Mammary epithelial cell (primary cell): ENCODE measurements at regions of chr9 and their contacts with region 1.

Region 1: DNA sequence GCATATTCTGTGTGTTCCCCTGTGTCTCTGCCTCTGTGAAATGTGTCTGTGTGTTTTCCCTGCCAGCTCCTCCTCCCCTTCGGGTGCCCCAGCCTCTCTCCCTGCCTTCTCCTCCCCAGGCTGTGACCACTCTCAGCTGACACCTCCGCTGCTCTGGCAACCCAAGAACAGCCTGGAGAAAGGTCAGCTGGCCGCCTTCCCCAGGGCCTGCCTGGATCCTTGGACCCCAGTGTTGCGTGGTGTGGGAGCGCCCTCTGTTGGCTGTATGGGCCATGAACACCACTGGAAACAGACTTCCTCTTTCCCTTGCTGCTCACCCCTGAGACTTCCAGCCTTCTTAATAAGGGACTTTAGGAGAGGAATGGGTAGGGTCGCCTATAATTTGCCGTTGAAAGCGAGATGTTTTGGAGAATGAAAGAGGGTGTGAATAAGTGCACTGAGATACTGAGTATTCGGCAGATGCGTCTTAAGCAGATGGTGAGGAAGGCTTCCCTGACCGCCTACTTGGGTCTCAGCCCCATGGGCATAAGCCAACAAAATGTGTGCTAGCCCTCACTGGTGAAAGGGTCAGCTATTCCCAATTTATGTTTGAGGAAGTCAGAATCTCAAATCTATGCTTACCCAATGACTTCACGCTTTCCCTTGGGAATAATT is 114.9 kb upstream of the TRIM32 start:
- DNase-seq: peak; percentile 48
- H3K4me3 ChIP-seq: no peak overlapping the region
- H3K27ac ChIP-seq: no peak overlapping the region
- H3K4me1 ChIP-seq: no peaks in the 10 kb centered on the region
- H3K27me3 ChIP-seq: no peaks in the 10 kb centered on the region
- CTCF ChIP-seq: peak; percentile 90 to 96

Region 2: DNA sequence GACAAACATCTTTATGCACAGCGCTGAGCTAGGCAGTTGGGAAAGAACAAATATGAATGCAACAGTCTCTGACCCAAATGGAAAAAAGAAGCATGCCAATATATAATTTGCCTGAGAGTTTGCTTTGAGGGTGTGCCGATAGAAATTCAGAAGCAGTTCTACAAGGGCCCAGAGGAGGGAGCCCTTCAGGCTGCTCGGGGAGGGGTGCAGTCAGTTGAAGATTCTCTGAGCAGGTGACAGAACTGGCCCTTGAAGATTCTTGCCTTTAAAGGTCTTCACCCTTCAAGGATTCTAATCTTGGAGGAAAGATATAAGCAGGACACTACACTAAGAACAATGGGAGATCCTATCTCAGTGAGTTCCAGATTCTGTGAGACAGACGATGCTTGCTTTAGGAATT is 422.4 kb before region 1 on chr9:
- CTCF ChIA-PET with region 1: interaction called, 3 read pairs
- dilution Hi-C with region 1: no loop called
- in situ Hi-C with region 1: loop called (anchors 10 kb)
- intact Hi-C with region 1: loop called (anchors 1 kb)
- DNase-seq: no peak
- H3K4me3 ChIP-seq: no peak overlapping the region
- H3K27ac ChIP-seq: no peak overlapping the region
- H3K4me1 ChIP-seq: peaks cover 18% of the 10 kb centered on the region
- H3K27me3 ChIP-seq: peaks cover 6% of the 10 kb centered on the region
- CTCF ChIP-seq: peak; percentile 69 to 79

Region 3: GRCh38 chr9:116163293-116164055 is 408.7 kb before region 1 on chr9:
- CTCF ChIA-PET with region 1: no interaction called
- dilution Hi-C with region 1: no loop called
- in situ Hi-C with region 1: loop called (anchors 10 kb)
- intact Hi-C with region 1: loop called (anchors 1 kb)
- DNase-seq: no peak
- H3K4me3 ChIP-seq: no peak overlapping the region
- H3K27ac ChIP-seq: no peak overlapping the region
- H3K4me1 ChIP-seq: no peaks in the 10 kb centered on the region
- H3K27me3 ChIP-seq: no peaks in the 10 kb centered on the region
- CTCF ChIP-seq: peak; percentile 52

Region 4: GRCh38 chr9:116288658-116289057 is 283.6 kb before region 1 on chr9:
- CTCF ChIA-PET with region 1: no interaction called
- dilution Hi-C with region 1: no loop called
- in situ Hi-C with region 1: no loop called
- intact Hi-C with region 1: loop called (anchors 2 kb)
- DNase-seq: peak; percentile 96
- H3K4me3 ChIP-seq: no peak overlapping the region
- H3K27ac ChIP-seq: no peak overlapping the region
- H3K4me1 ChIP-seq: no peaks in the 10 kb centered on the region
- H3K27me3 ChIP-seq: peaks cover 12% of the 10 kb centered on the region
- CTCF ChIP-seq: no peak

Region 5: DNA sequence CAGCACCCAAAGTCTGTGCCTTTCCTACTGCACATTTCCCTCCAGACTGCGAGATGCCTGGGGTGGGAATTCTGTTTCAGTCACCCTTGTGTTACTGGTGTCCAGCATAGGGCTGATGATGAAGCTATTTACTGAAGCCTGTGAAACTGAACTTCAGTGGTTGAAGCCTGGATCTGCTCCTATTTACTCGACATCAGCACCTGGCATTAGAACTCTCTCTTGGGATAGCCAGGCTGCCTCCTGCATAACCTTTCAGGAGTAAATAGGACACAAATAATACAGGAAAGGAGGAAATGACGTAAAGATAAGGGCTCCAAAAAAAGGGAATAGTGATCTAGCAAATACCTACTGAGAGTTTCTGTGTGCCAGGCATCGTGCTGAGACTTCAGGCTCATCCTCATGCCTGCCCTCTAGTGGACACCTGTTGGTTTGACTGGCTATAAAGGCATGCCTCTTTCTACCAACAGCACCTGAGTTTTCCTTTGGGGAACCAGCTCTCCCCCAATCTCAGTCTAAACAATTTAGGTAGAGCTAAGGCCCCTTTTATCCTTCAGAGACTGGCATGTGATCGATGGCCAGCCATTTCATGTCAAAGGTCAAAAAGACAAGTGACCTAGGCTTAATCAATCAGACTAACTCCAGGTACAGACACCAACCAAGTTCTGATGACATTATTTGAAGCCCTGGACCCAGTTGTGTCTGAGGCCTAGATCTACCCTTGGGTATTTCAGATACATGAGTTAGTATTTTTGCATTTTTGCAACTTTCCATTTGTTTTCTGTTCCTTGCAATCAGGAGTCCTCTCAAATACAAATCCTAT is 77.2 kb before region 1 on chr9:
- CTCF ChIA-PET with region 1: interaction called, 3 read pairs
- dilution Hi-C with region 1: no loop called
- in situ Hi-C with region 1: loop called in 1 of 2 experiments (anchors 10 kb)
- intact Hi-C with region 1: loop called (anchors 1 kb)
- DNase-seq: no peak
- H3K4me3 ChIP-seq: no peak overlapping the region
- H3K27ac ChIP-seq: no peak overlapping the region
- H3K4me1 ChIP-seq: no peaks in the 10 kb centered on the region
- H3K27me3 ChIP-seq: no peaks in the 10 kb centered on the region
- CTCF ChIP-seq: peak; percentile 83 to 86

Region 6: DNA sequence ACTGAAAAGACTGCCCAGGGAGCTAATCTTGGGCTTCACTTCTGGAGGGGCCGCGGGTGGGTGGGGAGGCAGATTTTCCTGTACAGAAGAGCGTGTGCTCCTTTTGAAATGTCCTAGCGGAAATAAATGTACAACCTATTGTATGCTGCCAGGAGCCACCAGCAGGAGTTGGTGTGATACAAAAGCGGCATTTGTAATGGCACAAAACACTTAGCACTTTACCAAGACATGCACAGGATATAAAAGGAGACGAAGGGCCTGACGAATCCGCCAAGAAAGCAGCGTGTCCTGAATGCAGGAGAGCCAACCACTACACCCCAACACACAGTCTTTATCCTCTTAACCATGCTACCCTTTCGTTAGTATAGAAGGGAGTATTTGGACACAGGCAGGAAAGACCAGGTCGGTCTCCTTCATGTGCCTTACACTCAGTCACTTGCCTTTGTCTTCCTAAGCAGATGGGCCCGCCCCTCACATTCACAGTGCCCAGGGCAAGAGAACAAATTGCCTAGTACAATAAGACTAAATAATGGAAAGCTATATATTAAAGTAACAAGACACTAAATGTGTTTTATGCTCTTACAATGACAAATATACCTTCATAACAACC is 333.0 kb after region 1 on chr9:
- CTCF ChIA-PET with region 1: no interaction called
- dilution Hi-C with region 1: no loop called
- in situ Hi-C with region 1: no loop called
- intact Hi-C with region 1: no loop called
- DNase-seq: no peak
- H3K4me3 ChIP-seq: no peak overlapping the region
- H3K27ac ChIP-seq: no peak overlapping the region
- H3K4me1 ChIP-seq: no peaks in the 10 kb centered on the region
- H3K27me3 ChIP-seq: no peaks in the 10 kb centered on the region
- CTCF ChIP-seq: no peak